ENCODE measurements at regions of chr11 and their contacts with region 1.

Region 1: DNA sequence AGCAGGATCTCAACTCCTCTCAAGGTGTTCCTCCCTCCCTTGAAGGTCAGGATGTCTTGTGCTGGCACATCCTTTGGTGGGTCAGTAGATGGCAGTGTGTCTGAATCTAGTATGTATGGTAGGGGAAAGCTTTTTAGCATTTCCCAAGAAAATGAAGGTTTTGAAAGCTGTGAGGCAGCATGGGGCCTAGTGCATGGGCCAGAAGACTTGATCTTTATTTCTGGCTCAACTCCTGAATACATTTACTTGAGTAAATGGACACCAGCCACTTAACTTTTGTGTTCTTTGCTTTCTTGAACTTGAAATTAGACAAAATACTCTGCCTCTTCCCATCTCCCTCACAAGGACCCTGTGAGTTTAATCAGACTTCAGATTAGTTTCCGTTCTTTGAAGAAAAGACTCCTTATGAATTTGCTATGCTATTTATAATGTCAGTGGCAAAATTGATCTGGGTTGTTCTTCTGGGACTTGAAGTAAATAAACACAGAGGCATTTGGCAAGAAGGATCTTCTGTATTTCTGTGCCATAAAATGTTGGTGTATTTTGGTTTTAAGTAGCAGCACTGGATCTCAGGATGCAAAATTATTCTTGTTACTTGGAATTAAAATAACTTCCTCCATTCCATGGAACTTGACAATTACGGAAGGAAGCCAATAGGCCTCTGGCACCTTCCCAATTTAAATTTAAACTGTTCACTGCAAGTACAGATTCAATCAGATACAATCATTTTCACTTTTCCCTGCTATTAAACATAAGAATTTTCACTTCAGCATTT is 288.8 kb downstream of the CASP12 start:
- DNase-seq: peak; percentile 21
- H3K4me3 ChIP-seq: no peak overlapping the region
- H3K27ac ChIP-seq: no peak overlapping the region
- H3K4me1 ChIP-seq: peaks cover 4% of the 10 kb centered on the region
- H3K27me3 ChIP-seq: no peaks in the 10 kb centered on the region
- CTCF ChIP-seq: peak; percentile 68

Region 2: DNA sequence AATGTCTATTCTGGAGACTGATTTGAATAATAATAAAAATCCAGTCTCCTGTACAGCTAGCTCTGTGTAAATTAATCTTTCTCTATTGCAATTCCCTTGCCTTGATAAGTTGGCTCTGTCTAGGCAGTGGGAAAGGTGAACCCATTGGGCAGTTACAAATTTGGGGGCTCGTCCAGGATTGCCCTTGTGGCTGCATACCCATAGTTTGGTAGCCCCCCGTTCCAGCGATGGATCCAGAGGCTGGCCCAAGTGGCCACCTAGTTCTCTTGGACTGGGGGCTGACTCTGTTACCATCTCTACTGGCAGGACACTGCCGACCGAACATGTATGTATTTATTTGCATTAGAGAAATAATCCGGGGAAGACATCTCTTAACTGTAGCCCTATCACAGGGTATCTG is 119.3 kb before region 1 on chr11:
- intact Hi-C with region 1: no loop called
- DNase-seq: no peak
- H3K4me3 ChIP-seq: no peak overlapping the region
- H3K27ac ChIP-seq: no peak overlapping the region
- H3K4me1 ChIP-seq: no peaks in the 10 kb centered on the region
- H3K27me3 ChIP-seq: no peaks in the 10 kb centered on the region
- CTCF ChIP-seq: no peak

Region 3: DNA sequence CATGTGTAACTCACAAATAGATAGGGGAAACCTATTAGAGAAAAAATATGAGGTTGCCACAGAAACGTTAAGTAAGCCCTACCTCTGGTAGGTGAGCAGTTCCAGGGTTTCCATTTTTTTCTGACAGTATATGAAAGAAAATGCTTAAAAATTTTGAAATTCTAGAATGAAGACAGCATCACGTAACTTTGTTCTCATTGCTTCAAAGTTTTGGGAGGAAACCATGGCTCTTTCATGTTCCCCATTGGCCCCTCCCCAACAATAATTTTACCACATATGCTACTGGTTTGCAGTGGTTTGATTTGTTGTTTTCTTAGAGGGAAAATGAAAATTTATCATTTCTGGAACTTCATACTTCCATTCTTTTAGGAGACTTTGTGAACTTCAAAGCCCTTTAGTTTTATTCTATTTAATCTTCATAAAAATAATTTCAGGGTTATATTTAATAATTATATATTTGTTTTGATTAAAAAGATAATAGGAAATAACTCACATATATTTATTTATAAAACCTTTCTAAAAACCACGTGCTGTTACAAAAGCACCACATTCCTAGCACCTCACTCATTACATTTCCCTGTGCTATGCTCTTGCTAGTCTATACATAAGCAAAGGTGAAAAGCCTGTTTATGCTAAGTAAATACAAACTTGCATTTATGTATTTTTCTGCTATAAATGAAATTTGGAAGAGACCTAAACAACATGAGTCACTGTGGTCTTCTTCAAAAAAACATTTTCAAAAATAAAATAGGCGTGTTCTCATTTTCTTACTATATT is 175.4 kb after region 1 on chr11:
- intact Hi-C with region 1: no loop called
- DNase-seq: no peak
- H3K4me3 ChIP-seq: no peak overlapping the region
- H3K27ac ChIP-seq: no peak overlapping the region
- H3K4me1 ChIP-seq: no peaks in the 10 kb centered on the region
- H3K27me3 ChIP-seq: no peaks in the 10 kb centered on the region
- CTCF ChIP-seq: no peak

Region 4: GRCh38 chr11:105862736-105863367 is 1253.4 kb after region 1 on chr11:
- intact Hi-C with region 1: loop called (anchors 10 kb)
- DNase-seq: no peak
- H3K4me3 ChIP-seq: no peak overlapping the region
- H3K27ac ChIP-seq: no peak overlapping the region
- H3K4me1 ChIP-seq: no peaks in the 10 kb centered on the region
- H3K27me3 ChIP-seq: no peaks in the 10 kb centered on the region
- CTCF ChIP-seq: peak; percentile 57

Measured in colonic mucosa (tissue), 4 donors.